Heart right ventricle (tissue), 16 donors: ENCODE measurements at regions of chr18 and their contacts with region 1.

Region 1: GRCh38 chr18:35775887-35776286 is 194.3 kb downstream of the GALNT1 start:
- DNase-seq: no peak
- ATAC-seq: peak in 1 of 8 donors; percentile 55
- H3K4me3 ChIP-seq: no peak overlapping the region
- H3K27ac ChIP-seq: no peak overlapping the region
- H3K4me1 ChIP-seq: peaks cover 0 to 12% (median 0%) of the 10 kb centered on the region in 9 donors
- H3K27me3 ChIP-seq: no peaks in the 10 kb centered on the region
- CTCF ChIP-seq: no peak

Region 2: DNA sequence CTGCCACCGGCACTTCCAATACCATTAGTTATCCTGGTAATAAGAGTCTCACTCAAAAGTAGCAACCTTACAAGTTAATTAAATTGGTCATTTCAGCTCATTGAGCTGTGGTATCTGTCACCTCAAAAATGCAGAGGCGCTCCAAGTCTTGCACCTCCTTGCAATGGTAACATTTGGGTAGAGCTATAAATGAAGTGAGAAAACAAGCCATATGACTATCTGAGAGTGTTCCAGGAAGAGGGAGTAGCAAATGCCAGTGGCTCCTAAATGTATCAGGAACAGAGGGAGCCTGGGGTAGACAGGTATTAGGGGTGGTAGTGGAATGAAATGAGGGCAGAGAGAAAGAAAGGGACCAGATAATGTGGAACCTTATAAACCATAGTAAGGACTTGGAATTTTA is 479.8 kb before region 1 on chr18:
- intact Hi-C with region 1: no loop called
- DNase-seq: no peak
- ATAC-seq: peak in 2 of 8 donors; percentile 31 to 46
- H3K4me3 ChIP-seq: no peak overlapping the region
- H3K27ac ChIP-seq: no peak overlapping the region
- H3K4me1 ChIP-seq: peaks cover 3 to 29% (median 18%) of the 10 kb centered on the region in 9 donors
- H3K27me3 ChIP-seq: no peaks in the 10 kb centered on the region
- CTCF ChIP-seq: no peak

Region 3: DNA sequence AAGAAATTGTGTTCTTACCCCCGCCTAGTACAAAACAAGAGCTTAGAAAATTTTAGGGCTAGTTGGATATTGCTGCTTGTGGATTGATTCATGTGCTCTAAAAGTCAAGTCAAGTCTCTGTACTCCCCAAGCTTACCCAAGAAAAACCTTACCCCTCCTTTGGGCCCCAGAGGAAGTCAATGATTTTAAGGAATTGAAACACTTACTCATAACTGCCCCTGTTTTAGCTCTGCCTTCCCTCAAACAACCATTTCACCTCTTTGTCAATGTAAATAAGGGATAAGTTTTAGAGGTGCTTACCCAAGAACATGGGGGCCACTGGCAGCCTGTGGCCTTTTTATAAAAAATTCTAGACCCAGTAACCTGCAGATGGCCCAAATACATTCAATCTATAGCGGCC is 59.9 kb after region 1 on chr18:
- intact Hi-C with region 1: loop called in 1 of 10 experiments (anchors 10 kb)
- DNase-seq: no peak
- ATAC-seq: no peak
- H3K4me3 ChIP-seq: no peak overlapping the region
- H3K27ac ChIP-seq: no peak overlapping the region
- H3K4me1 ChIP-seq: peaks cover 0 to 23% (median 0%) of the 10 kb centered on the region in 9 donors
- H3K27me3 ChIP-seq: no peaks in the 10 kb centered on the region
- CTCF ChIP-seq: no peak